HCT116 (cell line): ENCODE measurements at regions of chr1 and their contacts with region 1.

Region 1: DNA sequence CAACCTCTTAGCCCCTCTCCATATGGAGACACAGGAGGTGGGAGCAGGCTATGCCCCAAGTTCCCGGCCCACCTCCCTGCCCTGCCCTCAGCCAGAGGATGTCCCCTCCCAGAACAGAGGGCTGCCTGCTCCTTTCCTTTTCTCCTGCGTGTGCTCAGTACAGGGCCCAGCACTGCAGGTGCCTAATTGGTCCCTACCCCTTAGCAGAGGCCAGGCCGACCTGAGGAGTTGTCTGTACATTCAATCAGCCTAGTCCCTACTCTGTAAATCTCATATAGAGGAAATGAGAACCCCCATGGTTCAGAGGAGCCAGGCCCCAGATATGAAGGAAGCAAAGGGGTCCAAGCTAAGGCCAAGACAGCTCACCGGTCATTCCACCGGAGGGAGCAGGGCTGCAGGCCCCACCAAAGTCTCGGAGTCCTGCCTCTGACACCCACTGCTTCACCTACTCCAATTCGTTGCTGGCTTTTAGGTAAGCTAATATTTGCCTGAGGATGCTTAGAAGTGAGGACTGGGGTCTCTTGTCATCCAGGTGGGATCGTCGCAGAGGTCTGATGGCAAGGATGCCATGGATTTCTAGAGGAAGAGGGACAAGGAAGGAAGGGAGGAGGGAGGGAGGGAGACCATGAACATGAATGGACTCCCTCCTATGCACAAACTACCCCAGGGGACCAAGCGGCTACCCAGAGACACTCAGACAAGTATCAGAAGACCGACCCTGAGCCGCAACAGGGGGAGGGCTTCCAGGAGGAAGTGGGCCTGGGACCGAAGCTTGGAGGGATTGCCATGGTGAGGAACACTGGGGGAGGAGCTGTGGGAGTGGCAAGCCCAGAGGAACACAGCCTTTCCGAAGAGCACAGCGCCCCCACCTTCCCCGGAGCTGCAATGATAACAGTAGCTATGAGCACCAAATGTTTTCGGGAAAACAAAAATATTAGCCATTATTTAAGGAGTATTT is 30.4 kb upstream of the FOXO6 start:
- DNase-seq: peak; percentile 43
- ATAC-seq: peak; percentile 97
- H3K4me3 ChIP-seq: no peak overlapping the region
- H3K27ac ChIP-seq: no peak overlapping the region; the same call in 1 of the 2 replicates
- H3K4me1 ChIP-seq: peaks cover 6 to 20% of the 10 kb centered on the region in 2 experiments; a peak in 3 of 4 replicates
- H3K27me3 ChIP-seq: no peaks in the 10 kb centered on the region
- CTCF ChIP-seq: peak; percentile 29 to 67 (median 59); a peak in 5 of 6 replicates
- POLR2A ChIP-seq: no peak
- RAD21 ChIP-seq: peak; percentile 30

Region 2: GRCh38 chr1:41341772-41342562 is 11.1 kb after region 1 on chr1:
- CTCF ChIA-PET with region 1: interaction called, 18 read pairs
- POLR2A ChIA-PET with region 1: interaction called, 3 read pairs
- RAD21 ChIA-PET with region 1: no interaction called
- intact Hi-C with region 1: no loop called
- DNase-seq: no peak
- ATAC-seq: peak; percentile 81
- H3K4me3 ChIP-seq: peak overlapping the region; percentile 19 to 44
- H3K27ac ChIP-seq: peak overlapping the region; percentile 38; the same call in 1 of the 2 replicates
- H3K4me1 ChIP-seq: peaks cover 15 to 24% of the 10 kb centered on the region in 2 experiments
- H3K27me3 ChIP-seq: no peaks in the 10 kb centered on the region
- CTCF ChIP-seq: no peak
- POLR2A ChIP-seq: no peak
- RAD21 ChIP-seq: no peak

Region 3: DNA sequence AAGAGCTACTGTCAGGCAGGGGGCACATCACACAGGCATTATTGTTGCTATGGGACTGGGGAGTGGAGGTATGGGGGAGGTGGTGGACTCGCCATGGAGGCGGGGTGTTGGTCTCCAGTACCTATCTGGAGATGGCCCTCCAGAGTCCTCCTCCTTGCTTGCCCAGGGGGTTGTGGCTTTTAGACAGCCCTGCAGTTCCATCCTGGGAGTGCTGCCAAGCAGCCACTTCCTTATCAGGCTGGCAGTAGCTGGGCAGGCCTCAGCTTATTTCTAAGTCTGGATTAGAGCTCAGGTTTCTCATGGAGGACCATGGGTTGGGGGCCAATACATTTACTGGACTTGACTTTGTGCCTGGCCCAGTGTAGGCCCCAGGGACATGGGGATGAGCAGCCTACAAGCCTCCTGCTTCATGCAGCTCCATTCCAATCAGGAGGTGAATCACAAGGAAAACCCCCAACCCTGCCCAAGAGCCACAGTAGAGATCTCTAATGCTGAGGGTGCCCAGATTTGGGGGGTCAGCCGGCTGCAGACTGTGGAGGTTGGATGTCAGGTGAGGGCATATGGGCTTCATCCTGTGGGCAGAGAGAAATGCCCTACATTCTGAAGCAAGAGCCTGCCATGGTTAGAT is 364.4 kb after region 1 on chr1:
- CTCF ChIA-PET with region 1: no interaction called
- POLR2A ChIA-PET with region 1: no interaction called
- RAD21 ChIA-PET with region 1: no interaction called
- intact Hi-C with region 1: no loop called
- DNase-seq: no peak
- ATAC-seq: peak; percentile 54; the same call in 1 of the 2 replicates
- H3K4me3 ChIP-seq: no peak overlapping the region
- H3K27ac ChIP-seq: no peak overlapping the region
- H3K4me1 ChIP-seq: peaks cover 6 to 9% of the 10 kb centered on the region in 2 experiments; a peak in 3 of 4 replicates
- H3K27me3 ChIP-seq: no peaks in the 10 kb centered on the region
- CTCF ChIP-seq: no peak
- POLR2A ChIP-seq: no peak
- RAD21 ChIP-seq: no peak